Activated CD4-positive, alpha-beta T cell treated with anti-CD3 and anti-CD28 coated beads, Interleukin-2, amount 10 ng/mL, durations not matched to agents 7 days and 5 days (primary cell): ENCODE measurements at regions of chr11 and their contacts with region 1.

Region 1: GRCh38 chr11:6431861-6432260 is 8.9 kb downstream of the HPX start:
- DNase-seq: no peak
- H3K4me3 Mint-ChIP-seq: no peak overlapping the region
- H3K27ac Mint-ChIP-seq: no peak overlapping the region
- H3K4me1 Mint-ChIP-seq: peaks cover 6% of the 10 kb centered on the region
- H3K27me3 Mint-ChIP-seq: peaks cover 4% of the 10 kb centered on the region

Region 2: DNA sequence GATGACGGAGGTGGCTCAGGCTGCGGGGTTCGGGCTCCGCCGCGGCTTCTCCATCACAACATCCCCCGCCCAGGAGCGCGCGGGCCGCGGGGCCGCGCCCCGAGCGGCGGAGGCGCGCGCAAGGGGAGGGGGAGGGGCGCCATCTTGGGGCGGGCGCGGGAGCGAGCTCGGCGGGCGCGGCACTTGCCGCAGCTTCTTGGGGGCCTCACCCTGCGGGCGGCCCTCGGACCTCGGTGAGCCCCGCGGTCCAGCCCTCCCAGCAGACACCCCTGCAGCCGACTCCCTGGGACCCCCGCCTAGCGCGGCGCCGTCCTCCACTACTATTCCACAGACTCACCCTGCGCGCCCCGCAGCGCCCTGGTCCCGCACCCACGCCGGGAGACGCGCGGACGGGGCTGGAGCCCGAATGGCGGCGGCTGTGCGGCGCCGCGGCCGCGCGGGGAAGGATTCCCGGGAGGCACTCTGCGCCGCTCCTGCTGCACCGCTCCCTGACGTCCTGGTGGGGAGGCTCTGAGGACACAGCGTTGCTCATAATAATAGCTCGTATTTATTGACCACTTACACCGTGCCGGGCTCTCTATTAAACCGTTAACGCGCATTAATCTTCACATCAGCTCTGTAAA is 12.7 kb before region 1 on chr11 and contains the start of gene APBB1:
- CTCF ChIA-PET with region 1: interaction called, 12 read pairs
- POLR2A ChIA-PET with region 1: no interaction called
- DNase-seq: peak; percentile 64
- H3K4me3 Mint-ChIP-seq: peak within 1 kb of the TSS; percentile 76
- H3K27ac Mint-ChIP-seq: peak within 1 kb of the TSS; percentile 63
- H3K4me1 Mint-ChIP-seq: peaks cover 7% of the 10 kb centered on the region
- H3K27me3 Mint-ChIP-seq: peaks cover 32% of the 10 kb centered on the region
- total RNA-seq, gene APBB1: 58.2 to 61.3 TPM

Region 3: GRCh38 chr11:6443269-6444003 is 11.6 kb after region 1 on chr11:
- CTCF ChIA-PET with region 1: interaction called, 16 read pairs
- POLR2A ChIA-PET with region 1: no interaction called
- DNase-seq: peak; percentile 64
- H3K4me3 Mint-ChIP-seq: no peak overlapping the region
- H3K27ac Mint-ChIP-seq: no peak overlapping the region
- H3K4me1 Mint-ChIP-seq: no peaks in the 10 kb centered on the region
- H3K27me3 Mint-ChIP-seq: peaks cover 2% of the 10 kb centered on the region

Region 4: DNA sequence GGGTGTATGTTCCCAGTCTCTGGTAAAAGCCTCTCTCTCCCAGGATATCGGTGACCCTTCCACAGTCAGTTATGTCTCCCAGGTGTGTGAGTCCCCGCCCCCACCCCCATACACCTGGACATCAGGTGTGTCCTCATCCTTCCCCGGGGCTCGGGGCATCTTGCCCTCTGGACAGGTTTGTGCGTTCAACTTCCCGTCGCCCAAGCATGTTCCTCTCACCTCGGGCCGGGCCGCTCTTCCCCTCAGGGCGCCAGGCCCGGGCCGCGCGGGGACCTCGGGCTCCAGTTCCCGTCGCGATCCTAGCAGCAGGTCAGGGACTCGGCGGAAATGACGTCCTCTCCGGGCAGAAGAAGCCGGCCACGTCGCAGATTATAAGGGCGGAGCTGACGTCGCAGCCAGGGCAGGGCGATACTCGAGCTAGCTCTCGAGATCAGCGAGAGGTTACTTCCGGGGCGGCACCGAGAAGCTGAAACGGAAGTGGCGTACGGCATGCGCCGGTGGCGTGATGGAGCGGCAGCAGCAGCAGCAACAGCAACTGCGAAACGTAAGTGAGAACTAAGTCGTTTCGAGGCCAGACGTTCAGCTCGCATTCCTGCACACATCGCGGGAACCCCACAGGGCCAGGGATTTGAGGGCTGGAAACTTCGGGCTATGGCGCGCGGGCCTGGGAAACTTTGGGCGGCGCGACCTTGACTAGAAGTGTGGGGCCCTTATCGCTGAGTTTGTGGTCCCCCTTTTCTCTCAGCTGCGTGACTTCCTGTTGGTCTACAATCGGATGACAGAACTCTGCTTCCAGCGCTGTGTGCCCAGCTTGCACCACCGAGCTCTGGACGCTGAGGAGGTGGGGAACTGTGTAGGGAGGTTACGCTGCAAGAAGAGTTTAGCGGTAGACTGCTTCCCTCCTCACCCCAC is 49.4 kb after region 1 on chr11 and contains the starts of genes ARFIP2 and TIMM10B:
- CTCF ChIA-PET with region 1: no interaction called
- POLR2A ChIA-PET with region 1: no interaction called
- DNase-seq: peak; percentile 98
- H3K4me3 Mint-ChIP-seq: peak within 1 kb of the TSS; percentile 82
- H3K27ac Mint-ChIP-seq: peak within 1 kb of the TSS; percentile 93
- H3K4me1 Mint-ChIP-seq: peaks cover 37% of the 10 kb centered on the region
- H3K27me3 Mint-ChIP-seq: no peaks in the 10 kb centered on the region
- total RNA-seq, gene ARFIP2: 39.0 to 40.6 TPM
- total RNA-seq, gene TIMM10B: 25.6 to 27.0 TPM

Region 5: DNA sequence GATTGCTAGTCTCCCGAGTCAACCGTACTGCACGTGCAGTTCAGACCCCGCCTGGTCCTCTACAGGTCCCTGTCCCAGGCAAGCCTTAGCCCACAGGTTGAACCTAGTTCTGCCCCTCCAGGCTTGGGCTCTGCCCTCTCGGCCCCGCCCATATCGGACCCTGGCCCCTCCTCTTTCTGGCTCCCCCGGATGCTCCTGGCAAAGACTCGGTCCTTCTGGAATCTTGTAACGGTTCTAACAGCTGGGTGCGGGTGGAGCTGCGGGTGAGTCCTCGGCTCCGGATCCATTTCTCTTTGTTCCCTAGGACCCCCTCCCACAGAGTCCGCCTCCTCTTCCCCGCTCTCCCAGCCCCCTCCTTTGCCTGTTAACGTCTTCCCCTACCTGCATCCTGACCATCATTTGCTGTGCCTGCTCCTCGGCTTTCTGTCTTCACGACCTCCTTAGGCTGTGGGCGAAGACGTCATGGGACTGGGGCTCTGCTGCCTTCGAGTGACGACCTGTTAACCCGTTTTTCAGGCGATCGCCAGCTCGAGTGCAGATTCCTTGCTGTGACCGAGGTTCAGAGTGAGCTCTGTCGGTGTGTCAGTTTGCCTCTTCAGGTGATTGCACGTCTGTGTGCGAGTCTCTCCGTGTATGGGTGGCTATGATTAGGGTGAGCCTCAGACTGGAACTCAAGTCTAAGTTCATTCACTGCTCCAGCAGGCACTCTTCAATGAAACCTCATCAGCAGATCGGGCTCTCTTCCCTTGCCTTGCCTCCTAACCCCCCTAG is 65.4 kb after region 1 on chr11 and contains the start of gene DNHD1:
- CTCF ChIA-PET with region 1: no interaction called
- POLR2A ChIA-PET with region 1: no interaction called
- DNase-seq: no peak
- H3K4me3 Mint-ChIP-seq: no peak within 1 kb of the TSS
- H3K27ac Mint-ChIP-seq: no peak within 1 kb of the TSS
- H3K4me1 Mint-ChIP-seq: peaks cover 3% of the 10 kb centered on the region
- H3K27me3 Mint-ChIP-seq: no peaks in the 10 kb centered on the region
- total RNA-seq, gene DNHD1: 15.8 to 18.0 TPM